Activated CD4-positive, alpha-beta T cell treated with anti-CD3 and anti-CD28 coated beads for 36 hours (primary cell): ENCODE measurements at regions of chr3 and their contacts with region 1.

Region 1: DNA sequence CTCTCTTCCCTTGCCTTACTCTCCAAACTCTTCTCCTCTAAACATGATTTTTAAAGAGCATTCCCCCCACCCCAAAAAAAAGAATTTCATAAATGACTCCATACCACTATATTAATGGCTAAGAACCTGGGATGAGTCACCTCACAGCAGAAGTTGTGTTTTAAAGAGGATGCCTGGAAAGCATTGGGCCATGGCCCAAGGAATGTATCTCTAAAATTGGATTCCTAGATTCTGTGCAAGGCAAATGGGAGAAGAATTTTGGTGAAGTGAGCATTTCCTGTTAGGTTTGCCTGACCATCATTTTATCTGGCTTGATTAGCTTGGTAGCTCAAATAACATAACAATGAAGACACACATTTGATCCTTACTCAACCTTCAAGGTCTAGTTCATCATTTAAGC is 251.4 kb downstream of the NR1D2 start:
- DNase-seq: no peak
- ATAC-seq: no peak
- H3K4me3 Mint-ChIP-seq: no peak overlapping the region
- H3K27ac Mint-ChIP-seq: no peak overlapping the region
- H3K4me1 Mint-ChIP-seq: no peaks in the 10 kb centered on the region
- H3K27me3 Mint-ChIP-seq: peaks cover 7% of the 10 kb centered on the region

Region 2: DNA sequence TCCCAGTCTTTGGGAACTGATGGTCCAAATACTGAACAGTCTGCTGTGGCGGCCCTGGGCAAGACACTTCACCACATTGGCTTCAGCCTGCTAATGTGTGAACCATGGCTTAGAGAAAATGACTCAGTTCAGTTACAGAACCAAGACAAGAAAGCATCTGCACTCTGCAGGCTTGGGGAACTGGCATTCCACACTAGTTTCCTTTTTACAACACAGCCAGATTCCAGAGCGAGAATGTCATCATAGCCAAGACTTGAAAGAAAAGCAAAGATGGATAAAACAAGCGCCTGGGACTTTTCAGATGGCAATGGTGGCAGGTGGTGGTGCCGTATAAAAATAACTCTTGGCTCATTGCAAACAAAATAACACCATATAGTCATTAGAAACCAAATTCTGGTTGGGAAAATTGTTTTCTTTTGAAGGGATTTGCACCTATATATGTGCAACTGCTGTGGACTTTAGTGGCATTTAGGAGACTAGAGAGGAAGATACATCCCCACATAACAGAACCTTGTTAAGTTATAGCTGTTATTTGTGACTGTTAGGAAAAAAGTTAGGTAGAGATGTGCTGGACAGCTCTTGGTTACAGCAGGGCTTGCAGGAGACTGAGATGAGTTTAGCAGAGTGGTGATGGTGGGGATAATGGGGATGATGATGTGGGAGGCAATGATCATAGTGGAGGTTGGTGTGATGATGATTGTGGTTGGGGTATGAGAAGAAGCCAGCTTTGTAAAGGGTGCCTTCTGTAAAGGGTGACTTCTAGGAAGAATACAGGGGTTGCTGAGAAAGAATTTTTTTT is 24.5 kb after region 1 on chr3:
- CTCF ChIA-PET with region 1: no interaction called
- POLR2A ChIA-PET with region 1: no interaction called
- intact Hi-C with region 1: loop called in 1 of 2 experiments (anchors 1 kb)
- DNase-seq: no peak
- ATAC-seq: no peak
- H3K4me3 Mint-ChIP-seq: no peak overlapping the region
- H3K27ac Mint-ChIP-seq: no peak overlapping the region
- H3K4me1 Mint-ChIP-seq: no peaks in the 10 kb centered on the region
- H3K27me3 Mint-ChIP-seq: peaks cover 8% of the 10 kb centered on the region